ENCODE measurements at regions of chr6 and their contacts with region 1.

Region 1: GRCh38 chr6:154791556-154792317 is 58.5 kb downstream of the SCAF8 start:
- DNase-seq: no peak
- ATAC-seq: no peak
- H3K4me3 ChIP-seq: no peak overlapping the region
- H3K4me3 Mint-ChIP-seq: no peak overlapping the region
- H3K27ac ChIP-seq: no peak overlapping the region
- H3K27ac Mint-ChIP-seq: peak overlapping the region in 3 of 9 donors; percentile 19 to 84 (median 68)
- H3K4me1 ChIP-seq: no peaks in the 10 kb centered on the region
- H3K4me1 Mint-ChIP-seq: peaks cover 2 to 40% (median 23%) of the 10 kb centered on the region in 7 donors
- H3K27me3 ChIP-seq: no peaks in the 10 kb centered on the region
- H3K27me3 Mint-ChIP-seq: no peaks in the 10 kb centered on the region

Region 2: DNA sequence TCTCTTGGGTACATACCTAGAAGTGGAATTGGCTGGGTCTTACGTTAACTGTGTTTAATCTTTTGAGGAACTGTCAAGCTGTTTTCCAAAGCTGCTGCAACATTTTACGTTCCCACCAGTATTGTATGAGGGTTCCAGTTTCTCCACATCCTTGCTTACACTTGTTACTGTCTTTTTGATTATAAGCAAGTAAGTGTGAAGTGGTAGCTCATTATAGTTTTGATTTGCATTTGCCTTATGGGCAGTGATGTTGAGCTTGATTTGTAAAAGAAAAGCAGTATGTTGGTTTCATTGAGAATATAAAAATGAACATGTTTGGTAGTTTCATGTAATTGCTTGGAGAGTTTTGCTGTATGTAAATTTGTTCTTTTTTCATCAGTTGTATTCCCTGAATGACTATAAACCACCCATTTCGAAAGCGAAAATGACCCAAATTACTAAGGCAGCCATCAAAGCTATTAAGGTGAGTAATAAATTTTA is 18.1 kb before region 1 on chr6:
- CTCF ChIA-PET with region 1: no interaction called
- POLR2A ChIA-PET with region 1: interaction called, 3 read pairs
- intact Hi-C with region 1: loop called in 1 of 2 experiments (anchors 2 kb)
- DNase-seq: no peak
- ATAC-seq: no peak
- H3K4me3 ChIP-seq: no peak overlapping the region
- H3K4me3 Mint-ChIP-seq: no peak overlapping the region
- H3K27ac ChIP-seq: no peak overlapping the region
- H3K27ac Mint-ChIP-seq: no peak overlapping the region
- H3K4me1 ChIP-seq: peaks cover 0 to 5% of the 10 kb centered on the region in 2 donors
- H3K4me1 Mint-ChIP-seq: peaks cover 18 to 75% (median 62%) of the 10 kb centered on the region in 7 donors
- H3K27me3 ChIP-seq: no peaks in the 10 kb centered on the region
- H3K27me3 Mint-ChIP-seq: no peaks in the 10 kb centered on the region

Measured in naive thymus-derived CD4-positive, alpha-beta T cell (primary cell).